ENCODE measurements at regions of chr10 and their contacts with region 1.

Region 1: DNA sequence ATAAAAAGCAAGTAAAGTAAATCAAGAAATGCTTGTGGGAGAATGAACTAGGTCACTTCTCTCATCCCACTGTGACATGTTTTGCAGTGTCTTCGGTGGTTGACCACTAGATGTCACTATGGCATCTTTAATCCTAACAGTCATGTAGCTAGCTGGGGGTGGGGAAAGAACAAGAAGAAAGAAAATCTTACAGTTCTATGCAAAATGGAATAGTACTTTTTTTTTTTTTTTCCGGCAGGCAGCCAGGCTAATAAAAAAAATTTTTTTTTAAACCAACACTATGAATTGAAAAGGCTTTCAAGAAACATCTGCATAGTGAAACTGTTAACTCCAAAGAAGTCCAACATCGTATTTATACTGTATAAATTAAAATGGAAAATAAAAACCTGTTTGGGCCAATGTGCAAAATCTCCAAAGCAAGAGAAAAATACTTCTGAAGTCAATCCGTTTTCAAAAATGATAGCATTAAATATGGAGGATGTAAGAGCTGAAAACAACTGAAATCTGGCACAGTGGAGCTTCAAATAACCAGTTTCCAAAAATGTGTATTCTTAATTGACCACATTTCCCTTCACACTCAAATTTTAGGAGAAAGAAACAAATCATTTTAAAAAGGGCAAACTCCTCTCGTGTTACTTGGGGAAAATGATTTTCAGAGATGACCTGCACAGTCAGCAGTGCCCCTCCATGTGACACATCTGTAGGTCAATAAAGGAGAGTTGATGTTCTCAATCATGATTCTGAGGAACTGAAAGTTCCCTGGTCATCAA is 38.5 kb downstream of the CDK1 start:
- DNase-seq: peak; percentile 82

Region 2: DNA sequence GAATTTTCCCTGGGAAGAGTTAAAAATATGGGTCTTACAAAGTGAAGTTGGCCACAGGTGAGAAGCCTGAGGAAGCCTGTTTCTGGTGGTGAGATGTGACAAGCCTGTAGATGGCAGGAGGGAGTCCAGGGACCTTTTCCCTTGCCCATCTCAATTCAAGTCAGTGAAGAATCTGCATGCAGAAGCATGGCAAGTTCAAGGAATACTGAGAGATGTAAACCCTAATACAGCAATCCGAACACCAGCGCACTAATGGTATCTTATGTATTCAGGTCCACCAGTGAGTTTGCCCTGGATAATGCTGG is 53.6 kb after region 1 on chr10:
- in situ Hi-C with region 1: no loop called
- DNase-seq: peak; percentile 14

Region 3: GRCh38 chr10:60964257-60965235 is 147.7 kb after region 1 on chr10:
- in situ Hi-C with region 1: loop called (anchors 25 kb)
- DNase-seq: peak; percentile 87

Region 4: GRCh38 chr10:61078542-61079275 is 261.9 kb after region 1 on chr10:
- in situ Hi-C with region 1: no loop called
- DNase-seq: no peak

Measured in G401 (cell line).